A549 (cell line): ENCODE measurements at regions of chr19 and their contacts with region 1.

Region 1: DNA sequence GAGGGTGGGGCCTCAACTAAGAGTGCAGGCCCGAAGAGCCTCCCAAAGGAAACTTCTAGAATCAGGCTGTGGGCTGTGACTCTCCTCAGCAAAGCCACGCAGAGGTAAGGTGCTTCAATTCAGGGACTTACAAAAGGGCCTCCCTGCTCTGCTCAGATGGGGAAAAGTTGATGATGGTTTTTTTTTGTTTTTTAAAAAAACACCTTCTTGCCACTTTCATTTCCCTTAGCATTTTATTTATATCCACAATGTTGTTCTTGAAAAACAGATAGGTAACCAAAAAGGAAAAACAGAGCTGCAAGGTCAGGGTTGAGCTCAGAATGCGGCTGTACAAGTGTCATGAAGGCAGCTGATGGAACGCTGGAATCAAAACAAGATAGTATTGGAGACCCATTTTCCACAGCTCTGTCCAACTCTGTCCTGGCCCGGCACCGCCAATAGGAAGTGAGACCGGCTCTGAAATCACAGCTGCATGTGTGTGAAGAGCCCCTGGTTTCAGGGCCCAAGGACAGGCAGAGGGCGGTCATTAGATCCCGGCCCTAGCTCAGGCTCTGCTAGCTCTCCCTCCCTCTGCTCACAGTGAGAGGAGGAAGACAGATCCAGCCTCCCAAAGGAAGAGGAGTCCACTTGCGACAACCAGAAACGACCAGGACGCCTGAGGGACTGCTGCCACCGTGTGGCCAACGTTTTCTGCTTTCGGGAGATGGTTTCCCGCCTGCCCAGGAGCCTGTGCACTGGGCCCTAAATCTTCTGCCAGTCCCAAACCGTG is 58.3 kb downstream of the KLF2 start:
- DNase-seq: peak; percentile 75 to 81
- ATAC-seq: peak; percentile 80 to 93
- H3K4me3 ChIP-seq: no peak overlapping the region
- H3K27ac ChIP-seq: peak overlapping the region in 1 of 2 experiments; percentile 52; a peak in 1 of 6 replicates
- H3K4me1 ChIP-seq: 0 out of 3 replicates have a peak, but pooled peaks cover 3% of the 10 kb centered on the region
- CTCF ChIP-seq: peak; percentile 67
- EP300 ChIP-seq: no peak
- POLR2A ChIP-seq: no peak
- RAD21 ChIP-seq: peak; percentile 87 to 92

Region 2: GRCh38 chr19:16252459-16253205 is 130.3 kb before region 1 on chr19:
- CTCF ChIA-PET with region 1: interaction called, 92 read pairs
- POLR2A ChIA-PET with region 1: interaction called, 3 read pairs
- DNase-seq: no peak
- ATAC-seq: no peak
- H3K4me3 ChIP-seq: no peak overlapping the region
- H3K27ac ChIP-seq: no peak overlapping the region
- H3K4me1 ChIP-seq: no peaks in the 10 kb centered on the region
- CTCF ChIP-seq: no peak
- EP300 ChIP-seq: no peak
- POLR2A ChIP-seq: no peak
- RAD21 ChIP-seq: no peak

Region 3: DNA sequence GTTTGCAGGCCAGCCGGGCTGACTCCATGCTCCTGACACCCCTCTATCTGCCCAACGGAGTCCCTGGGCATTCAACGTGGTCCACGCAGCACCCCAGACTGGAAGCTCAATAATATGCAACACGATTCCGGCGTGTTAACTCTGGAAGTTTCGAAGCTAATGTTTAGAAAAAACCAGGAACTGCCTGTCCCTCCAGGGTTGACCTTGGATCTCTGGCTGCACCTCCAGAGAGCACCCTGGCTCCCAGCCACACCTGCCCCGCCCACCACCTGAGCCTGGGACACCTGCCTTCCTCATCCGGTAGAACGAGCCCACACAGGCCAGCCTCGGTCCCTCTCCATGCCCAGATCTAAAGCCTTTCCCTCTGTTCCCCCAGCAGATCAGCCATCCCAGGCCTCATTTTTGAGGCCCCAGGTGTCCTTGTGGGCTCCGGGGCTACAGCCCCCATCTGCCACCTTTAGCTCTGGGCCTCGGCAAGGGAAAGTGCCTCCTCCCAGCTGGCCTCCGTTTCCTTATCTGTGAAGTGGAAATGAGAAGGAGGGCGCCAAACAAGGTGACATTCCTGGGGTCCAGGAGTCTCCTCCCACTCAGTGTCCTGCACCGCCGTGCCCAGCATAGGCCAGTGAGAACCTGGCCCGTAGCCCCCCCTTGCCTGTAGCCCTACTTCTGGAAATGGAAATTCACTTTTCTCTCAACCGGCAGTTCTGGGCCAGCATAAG is 19.7 kb before region 1 on chr19:
- CTCF ChIA-PET with region 1: interaction called, 10 read pairs
- POLR2A ChIA-PET with region 1: no interaction called
- DNase-seq: no peak
- ATAC-seq: no peak
- H3K4me3 ChIP-seq: no peak overlapping the region
- H3K27ac ChIP-seq: no peak overlapping the region
- H3K4me1 ChIP-seq: no peaks in the 10 kb centered on the region
- CTCF ChIP-seq: no peak
- EP300 ChIP-seq: no peak
- POLR2A ChIP-seq: no peak
- RAD21 ChIP-seq: no peak